Aorta (tissue), 5 donors: ENCODE measurements at regions of chr19 and their contacts with region 1.

Region 1: GRCh38 chr19:58203814-58204475 is 21.1 kb downstream of the ZNF274 start:
- DNase-seq: no peak
- ATAC-seq: no peak
- H3K4me3 ChIP-seq: no peak overlapping the region
- H3K27ac ChIP-seq: no peak overlapping the region
- H3K4me1 ChIP-seq: no peaks in the 10 kb centered on the region
- H3K27me3 ChIP-seq: no peaks in the 10 kb centered on the region

Region 2: DNA sequence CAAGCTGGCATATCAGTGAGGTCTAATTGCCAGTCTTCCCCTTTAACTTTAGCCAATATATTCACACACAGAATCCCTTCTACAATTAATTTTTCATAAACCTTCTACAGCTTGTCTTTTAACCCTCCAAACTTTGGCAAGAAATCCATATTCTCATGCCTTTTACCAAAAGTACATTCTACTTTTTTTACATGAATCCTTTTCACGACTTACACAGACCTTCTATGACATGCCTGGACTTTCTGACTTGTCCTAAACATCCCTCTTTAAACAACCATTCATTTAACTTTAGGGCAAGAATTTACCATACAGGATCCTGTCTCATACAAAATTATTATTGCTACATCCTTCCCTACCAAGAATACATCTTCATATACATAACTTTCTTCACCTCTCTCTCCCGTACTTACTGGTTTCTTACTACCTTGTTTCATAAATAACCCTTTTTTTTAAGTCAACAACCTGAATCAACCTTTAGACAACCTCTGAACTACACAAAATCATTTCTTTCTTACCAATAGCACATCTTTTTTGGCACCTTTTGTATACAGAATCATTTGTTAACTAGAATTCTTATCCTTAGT is 48.2 kb after region 1 on chr19:
- intact Hi-C with region 1: loop called in 1 of 2 experiments (anchors 10 kb)
- DNase-seq: no peak
- ATAC-seq: no peak
- H3K4me3 ChIP-seq: no peak overlapping the region
- H3K27ac ChIP-seq: no peak overlapping the region
- H3K4me1 ChIP-seq: no peaks in the 10 kb centered on the region
- H3K27me3 ChIP-seq: no peaks in the 10 kb centered on the region